ENCODE measurements at regions of chr6 and their contacts with region 1.

Region 1: DNA sequence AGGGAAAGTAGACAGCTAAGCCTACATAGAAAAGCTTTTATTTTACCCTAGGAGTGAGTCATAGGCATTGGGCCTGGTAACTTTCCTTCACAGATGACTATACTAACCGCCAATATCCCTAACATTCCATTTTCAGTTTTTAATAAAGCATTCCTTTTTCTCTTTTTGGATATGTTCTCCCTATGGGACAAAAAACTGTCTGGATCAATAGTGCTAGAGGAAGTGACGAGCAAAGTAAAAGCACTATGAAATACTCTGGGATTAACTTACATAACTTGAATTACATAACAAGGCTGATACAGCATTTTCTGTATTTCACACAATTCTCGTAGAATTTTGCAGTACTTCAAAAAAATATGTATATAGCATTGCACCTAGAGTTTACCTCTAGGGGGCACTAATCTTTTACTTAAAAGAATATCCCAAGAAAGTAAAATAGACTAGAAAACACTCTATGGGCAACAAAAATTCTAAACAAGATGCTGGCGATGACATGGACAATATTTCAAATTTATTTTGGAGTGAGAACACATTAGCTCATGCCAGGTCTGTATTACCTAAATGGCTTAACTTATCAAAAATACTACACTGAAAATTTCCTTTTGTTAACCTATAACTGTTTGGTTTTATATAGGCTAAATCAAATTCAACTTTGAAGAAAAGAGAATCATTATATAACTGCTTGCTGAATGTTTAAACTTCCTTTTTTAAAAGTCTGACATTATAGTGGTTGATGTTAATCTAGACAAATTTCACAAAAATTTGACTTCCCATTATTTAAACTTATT is 66.3 kb upstream of the DST start:
- DNase-seq: no peak
- H3K4me3 ChIP-seq: no peak overlapping the region
- H3K27ac ChIP-seq: no peak overlapping the region
- H3K4me1 ChIP-seq: peaks cover 0 to 8% (median 7%) of the 10 kb centered on the region in 4 experiments; a peak in 5 of 7 replicates
- H3K27me3 ChIP-seq: no peaks in the 10 kb centered on the region
- CTCF ChIP-seq: peak in 1 of 3 experiments; percentile 42; a peak in 2 of 4 replicates
- EP300 ChIP-seq: no peak
- POLR2A ChIP-seq: no peak
- RAD21 ChIP-seq: peak in 1 of 2 experiments; percentile 44; a peak in 3 of 4 replicates

Region 2: DNA sequence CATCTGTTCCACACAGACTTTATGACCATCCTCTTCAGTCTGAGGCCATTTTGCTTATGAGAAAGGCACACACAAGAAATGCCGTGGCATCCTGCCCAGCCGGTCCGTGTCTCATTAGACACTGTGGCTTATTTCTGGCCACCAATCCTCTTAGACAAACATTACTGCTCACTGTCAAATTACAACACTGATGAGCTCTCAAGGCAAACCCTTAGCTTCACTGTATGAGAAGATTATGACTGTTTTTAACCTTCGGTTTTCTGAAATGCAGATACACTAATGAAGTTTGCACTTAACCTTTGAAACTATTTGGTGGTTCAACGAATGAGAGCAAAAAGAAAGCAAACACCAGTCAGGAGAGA is 15.8 kb before region 1 on chr6:
- CTCF ChIA-PET with region 1: interaction called, 20 read pairs
- POLR2A ChIA-PET with region 1: no interaction called
- DNase-seq: no peak
- H3K4me3 ChIP-seq: no peak overlapping the region
- H3K27ac ChIP-seq: no peak overlapping the region
- H3K4me1 ChIP-seq: no peaks in the 10 kb centered on the region
- H3K27me3 ChIP-seq: no peaks in the 10 kb centered on the region
- CTCF ChIP-seq: no peak
- EP300 ChIP-seq: no peak
- POLR2A ChIP-seq: no peak
- RAD21 ChIP-seq: no peak

Region 3: DNA sequence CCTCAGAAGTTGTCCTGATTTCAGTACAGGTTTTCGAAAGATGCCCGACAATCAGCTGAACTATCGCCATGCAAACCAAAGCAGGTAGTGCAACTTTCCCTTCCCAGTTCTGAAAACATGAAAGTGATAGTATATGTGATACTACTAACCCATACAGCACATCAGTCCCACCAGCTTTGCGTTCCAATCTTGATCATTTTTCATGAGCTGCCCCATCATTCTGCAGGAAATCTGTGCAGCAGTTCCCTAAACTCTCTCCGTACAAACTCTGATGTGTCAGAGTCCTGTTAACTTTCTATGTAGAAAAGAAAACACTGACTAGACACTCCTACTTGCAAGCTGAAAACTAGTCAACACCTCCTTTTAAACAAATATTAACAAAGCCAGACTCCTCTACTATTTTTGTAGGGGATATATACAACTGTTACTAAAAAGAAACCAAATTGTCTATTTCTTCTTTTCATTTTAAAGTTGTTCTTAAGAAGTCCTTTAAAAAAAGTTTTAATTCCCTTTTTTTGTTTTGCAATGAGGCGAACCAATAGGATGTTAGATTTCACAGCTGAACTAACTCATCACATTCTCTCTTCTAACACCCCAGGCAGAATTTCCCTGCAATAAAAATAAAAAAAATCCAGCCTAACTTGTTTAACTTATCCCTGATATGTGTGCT is 33.3 kb after region 1 on chr6:
- CTCF ChIA-PET with region 1: interaction called, 18 read pairs
- POLR2A ChIA-PET with region 1: no interaction called
- DNase-seq: no peak
- H3K4me3 ChIP-seq: no peak overlapping the region; a peak in 1 of 8 replicates
- H3K27ac ChIP-seq: no peak overlapping the region
- H3K4me1 ChIP-seq: peaks cover 3 to 25% (median 16%) of the 10 kb centered on the region in 4 experiments; a peak in 6 of 7 replicates
- H3K27me3 ChIP-seq: no peaks in the 10 kb centered on the region
- CTCF ChIP-seq: no peak
- EP300 ChIP-seq: no peak
- POLR2A ChIP-seq: no peak
- RAD21 ChIP-seq: no peak

Region 4: DNA sequence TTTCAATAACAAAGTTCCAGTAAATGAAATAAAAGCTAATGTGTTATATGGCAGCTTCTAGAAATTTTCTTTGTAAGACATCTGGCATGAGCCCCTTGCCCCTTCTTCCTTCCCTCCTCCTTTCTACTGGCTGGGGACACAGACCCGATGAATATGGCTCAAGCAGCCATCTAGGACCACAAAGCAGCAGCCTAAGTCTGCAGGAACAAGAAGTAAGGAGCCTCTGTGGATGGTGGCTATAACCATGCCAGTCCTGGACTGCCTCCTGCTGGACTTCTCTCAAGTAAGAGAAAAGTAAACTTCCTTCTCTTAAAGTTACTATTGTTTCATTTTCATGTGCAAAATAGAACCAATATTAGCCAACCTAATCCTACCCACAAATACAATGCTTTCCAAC is 48.6 kb after region 1 on chr6:
- CTCF ChIA-PET with region 1: interaction called, 102 read pairs
- POLR2A ChIA-PET with region 1: no interaction called
- DNase-seq: no peak
- H3K4me3 ChIP-seq: no peak overlapping the region
- H3K27ac ChIP-seq: no peak overlapping the region
- H3K4me1 ChIP-seq: peaks cover 0 to 18% (median 12%) of the 10 kb centered on the region in 4 experiments; a peak in 6 of 7 replicates
- H3K27me3 ChIP-seq: no peaks in the 10 kb centered on the region
- CTCF ChIP-seq: peak in 2 of 3 experiments; percentile 49 to 61; a peak in 3 of 4 replicates
- EP300 ChIP-seq: no peak
- POLR2A ChIP-seq: no peak
- RAD21 ChIP-seq: peak; percentile 73 to 79

Region 5: DNA sequence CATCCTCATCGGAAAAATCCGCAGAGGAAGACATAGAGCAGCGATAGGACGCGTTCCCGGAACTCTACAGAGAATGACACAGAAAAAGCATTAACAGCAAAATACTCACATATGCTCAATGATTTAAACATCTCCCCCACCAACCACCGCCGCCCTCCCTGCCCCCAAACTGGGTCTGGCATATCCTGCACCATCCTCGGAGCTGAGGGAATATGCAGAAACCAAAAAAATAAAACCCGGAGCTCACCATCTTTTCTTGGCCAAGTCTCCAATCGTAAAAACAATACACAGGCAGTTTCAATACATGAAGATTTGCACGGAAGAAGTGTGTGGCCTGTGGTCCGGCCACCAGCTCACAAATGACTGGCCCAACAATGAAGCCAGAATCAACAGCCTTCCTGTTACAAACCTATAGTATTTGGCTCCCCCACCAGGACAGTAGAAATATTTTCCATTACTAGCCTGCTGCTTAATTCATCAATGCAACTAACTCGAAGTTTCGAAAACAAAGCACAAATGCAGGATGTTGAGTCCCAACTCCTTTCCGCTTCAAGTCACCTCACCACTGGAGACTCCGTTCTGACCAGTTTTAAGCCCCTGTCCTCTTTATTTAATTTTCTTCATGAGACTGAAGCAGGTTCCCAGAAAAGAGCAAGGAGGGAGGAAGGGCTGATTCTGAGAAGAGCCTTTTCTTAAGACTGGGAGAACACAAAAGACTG is 142.7 kb after region 1 on chr6:
- CTCF ChIA-PET with region 1: interaction called, 71 read pairs
- POLR2A ChIA-PET with region 1: no interaction called
- DNase-seq: peak in 1 of 2 experiments; percentile 69
- H3K4me3 ChIP-seq: peak overlapping the region; percentile 74 to 82 (median 79)
- H3K27ac ChIP-seq: no peak overlapping the region
- H3K4me1 ChIP-seq: peaks cover 5 to 18% (median 14%) of the 10 kb centered on the region in 4 experiments; a peak in 6 of 7 replicates
- H3K27me3 ChIP-seq: no peaks in the 10 kb centered on the region
- CTCF ChIP-seq: peak in 2 of 3 experiments; percentile 66 to 71; a peak in 3 of 4 replicates
- EP300 ChIP-seq: peak in 1 of 2 experiments; percentile 91; a peak in 1 of 3 replicates
- POLR2A ChIP-seq: peak in 1 of 2 experiments; percentile 58; a peak in 1 of 3 replicates
- RAD21 ChIP-seq: peak; percentile 75 to 84